ENCODE measurements at regions of chr3 and their contacts with region 1.

Region 1: GRCh38 chr3:121979734-121980449 is 42.2 kb downstream of the ILDR1 start:
- DNase-seq: peak; percentile 49
- H3K4me3 Mint-ChIP-seq: no peak overlapping the region
- H3K27ac Mint-ChIP-seq: no peak overlapping the region
- H3K4me1 Mint-ChIP-seq: peaks cover 11% of the 10 kb centered on the region
- H3K27me3 Mint-ChIP-seq: no peaks in the 10 kb centered on the region
- CTCF ChIP-seq: no peak

Region 2: GRCh38 chr3:121228971-121229370 is 750.9 kb before region 1 on chr3:
- CTCF ChIA-PET with region 1: no interaction called
- POLR2A ChIA-PET with region 1: no interaction called
- intact Hi-C with region 1: no loop called
- DNase-seq: no peak
- H3K4me3 Mint-ChIP-seq: no peak overlapping the region
- H3K27ac Mint-ChIP-seq: no peak overlapping the region
- H3K4me1 Mint-ChIP-seq: peaks cover 11% of the 10 kb centered on the region
- H3K27me3 Mint-ChIP-seq: no peaks in the 10 kb centered on the region
- CTCF ChIP-seq: no peak

Region 3: DNA sequence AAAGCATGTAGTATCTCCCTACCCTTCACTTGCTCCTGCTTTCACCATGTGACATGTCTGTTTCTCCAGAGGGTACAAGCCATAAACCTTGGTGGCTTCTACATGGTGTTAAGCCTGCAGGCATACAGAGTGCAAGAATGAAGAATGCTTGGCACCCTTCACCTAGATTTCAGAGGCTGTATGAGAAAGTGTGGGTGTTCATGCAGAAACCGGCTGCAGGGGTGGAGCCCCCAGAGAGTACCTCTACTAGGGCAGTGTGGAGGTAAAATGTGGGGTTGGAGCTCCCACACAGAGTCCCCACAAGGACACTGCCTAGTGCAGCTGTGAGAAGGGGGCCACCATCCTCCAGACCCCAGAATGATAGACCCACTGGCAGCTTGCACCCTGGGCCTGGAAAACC is 53.5 kb before region 1 on chr3:
- CTCF ChIA-PET with region 1: no interaction called
- POLR2A ChIA-PET with region 1: no interaction called
- intact Hi-C with region 1: no loop called
- DNase-seq: no peak
- H3K4me3 Mint-ChIP-seq: no peak overlapping the region
- H3K27ac Mint-ChIP-seq: no peak overlapping the region
- H3K4me1 Mint-ChIP-seq: no peaks in the 10 kb centered on the region
- H3K27me3 Mint-ChIP-seq: no peaks in the 10 kb centered on the region
- CTCF ChIP-seq: no peak

Region 4: DNA sequence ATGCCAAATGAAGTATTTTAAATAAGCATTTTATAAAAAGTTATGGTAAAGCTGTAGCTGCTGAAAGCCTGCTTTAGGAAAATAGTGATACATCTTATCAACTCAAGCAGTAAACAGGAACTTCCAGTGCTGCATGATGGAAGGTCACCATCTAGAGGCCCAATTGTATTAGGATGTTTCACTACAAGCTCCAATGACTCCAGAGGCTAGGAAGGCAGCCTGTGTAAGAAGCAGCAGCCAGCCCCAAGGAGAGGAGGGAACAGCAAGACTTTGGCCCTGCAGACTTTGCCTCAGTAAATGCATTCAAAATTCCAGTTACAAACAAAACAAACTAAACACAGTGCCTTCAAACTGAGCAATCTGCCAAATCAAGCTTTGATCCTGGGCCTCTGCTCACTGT is 10.1 kb after region 1 on chr3:
- CTCF ChIA-PET with region 1: interaction called, 14 read pairs
- POLR2A ChIA-PET with region 1: interaction called, 5 read pairs
- intact Hi-C with region 1: no loop called
- DNase-seq: no peak
- H3K4me3 Mint-ChIP-seq: no peak overlapping the region
- H3K27ac Mint-ChIP-seq: no peak overlapping the region
- H3K4me1 Mint-ChIP-seq: no peaks in the 10 kb centered on the region
- H3K27me3 Mint-ChIP-seq: no peaks in the 10 kb centered on the region
- CTCF ChIP-seq: no peak

Region 5: DNA sequence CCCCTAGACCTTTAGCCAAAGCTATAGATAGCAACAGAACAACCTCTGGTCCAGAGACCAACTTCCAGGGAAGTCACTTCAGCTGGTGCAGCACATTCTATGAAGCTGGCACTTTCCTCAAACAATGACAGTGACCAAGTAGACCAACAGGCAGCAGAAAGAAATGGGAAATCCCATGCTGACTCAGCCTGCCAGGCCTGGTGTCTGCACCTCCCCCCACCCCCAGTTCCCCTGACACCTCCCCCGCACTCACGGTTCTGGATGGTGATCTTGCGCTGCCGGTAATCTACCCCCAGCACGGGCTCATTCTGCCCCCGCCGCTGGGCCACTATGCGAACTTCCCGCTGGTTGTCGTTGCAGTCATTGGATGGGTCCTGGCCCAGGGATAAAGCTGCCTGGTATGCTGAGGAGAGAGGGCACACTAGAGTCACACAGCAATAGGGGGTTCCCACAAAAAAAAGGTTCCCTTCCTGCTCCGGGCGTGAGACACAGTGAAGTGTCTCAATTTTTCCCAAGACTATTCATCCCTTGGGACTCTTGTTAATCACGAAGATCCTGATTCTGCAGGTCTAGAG is 25.2 kb after region 1 on chr3:
- CTCF ChIA-PET with region 1: no interaction called
- POLR2A ChIA-PET with region 1: no interaction called
- intact Hi-C with region 1: no loop called
- DNase-seq: no peak
- H3K4me3 Mint-ChIP-seq: no peak overlapping the region
- H3K27ac Mint-ChIP-seq: no peak overlapping the region
- H3K4me1 Mint-ChIP-seq: peaks cover 6% of the 10 kb centered on the region
- H3K27me3 Mint-ChIP-seq: no peaks in the 10 kb centered on the region
- CTCF ChIP-seq: no peak